MCF 10A (cell line): ENCODE measurements at regions of chr1 and their contacts with region 1.

Region 1: GRCh38 chr1:38859561-38860453 is at the start of gene RRAGC:
- DNase-seq: peak; percentile 99
- H3K4me3 Mint-ChIP-seq: peak within 1 kb of the TSS; percentile 93
- H3K27ac Mint-ChIP-seq: peak within 1 kb of the TSS; percentile 81
- H3K4me1 Mint-ChIP-seq: peaks cover 21% of the 10 kb centered on the region
- H3K27me3 Mint-ChIP-seq: no peaks in the 10 kb centered on the region
- CTCF ChIP-seq: no peak
- total RNA-seq, gene RRAGC: 23.3 and 40.6 TPM in 2 replicates

Region 2: DNA sequence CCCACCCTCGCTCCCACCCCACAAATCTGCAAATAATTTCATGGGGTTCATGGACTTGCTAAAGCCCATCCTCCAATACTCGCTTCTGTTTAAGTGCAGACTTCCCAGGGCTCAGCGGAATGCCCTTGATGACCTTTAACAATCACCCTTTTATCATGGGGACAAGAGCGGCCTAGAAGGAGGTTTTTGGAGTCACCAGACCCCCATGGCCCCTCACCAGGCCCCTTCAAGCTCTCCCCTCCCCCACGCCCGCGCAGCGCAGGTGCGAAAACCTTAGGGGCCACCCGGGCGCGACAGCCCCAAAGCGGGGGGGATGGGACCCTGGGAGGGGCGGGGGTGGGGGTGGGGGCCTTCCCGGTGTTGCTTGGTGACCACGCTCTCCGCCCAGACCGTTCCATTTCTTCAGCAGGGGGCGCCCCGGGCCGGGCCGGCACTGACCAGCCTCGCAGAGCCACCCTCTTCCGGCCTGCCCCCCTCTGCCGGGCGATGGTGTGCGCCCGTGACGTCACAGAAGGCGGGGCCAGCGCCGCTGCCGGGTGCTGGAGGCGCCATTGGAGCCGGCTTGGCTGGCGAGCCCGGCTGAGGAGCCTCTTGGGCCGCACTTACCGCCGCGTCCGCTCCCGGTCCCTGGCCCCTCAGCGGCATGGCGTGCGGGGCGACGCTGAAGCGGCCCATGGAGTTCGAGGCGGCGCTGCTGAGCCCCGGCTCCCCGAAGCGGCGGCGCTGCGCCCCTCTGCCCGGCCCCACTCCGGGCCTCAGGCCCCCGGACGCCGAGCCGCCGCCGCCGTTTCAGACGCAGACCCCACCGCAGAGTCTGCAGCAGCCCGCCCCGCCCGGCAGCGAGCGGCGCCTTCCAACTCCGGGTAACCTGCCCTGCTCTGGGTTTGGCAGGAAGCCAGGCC is 131.2 kb after region 1 on chr1 and contains the start of gene AKIRIN1:
- CTCF ChIA-PET with region 1: interaction called, 3 read pairs
- POLR2A ChIA-PET with region 1: interaction called, 10 read pairs
- intact Hi-C with region 1: no loop called
- DNase-seq: peak; percentile 92
- H3K4me3 Mint-ChIP-seq: peak within 1 kb of the TSS; percentile 79
- H3K27ac Mint-ChIP-seq: peak within 1 kb of the TSS; percentile 76
- H3K4me1 Mint-ChIP-seq: peaks cover 21% of the 10 kb centered on the region
- H3K27me3 Mint-ChIP-seq: no peaks in the 10 kb centered on the region
- CTCF ChIP-seq: no peak
- total RNA-seq, gene AKIRIN1: 59.0 and 63.7 TPM in 2 replicates

Region 3: DNA sequence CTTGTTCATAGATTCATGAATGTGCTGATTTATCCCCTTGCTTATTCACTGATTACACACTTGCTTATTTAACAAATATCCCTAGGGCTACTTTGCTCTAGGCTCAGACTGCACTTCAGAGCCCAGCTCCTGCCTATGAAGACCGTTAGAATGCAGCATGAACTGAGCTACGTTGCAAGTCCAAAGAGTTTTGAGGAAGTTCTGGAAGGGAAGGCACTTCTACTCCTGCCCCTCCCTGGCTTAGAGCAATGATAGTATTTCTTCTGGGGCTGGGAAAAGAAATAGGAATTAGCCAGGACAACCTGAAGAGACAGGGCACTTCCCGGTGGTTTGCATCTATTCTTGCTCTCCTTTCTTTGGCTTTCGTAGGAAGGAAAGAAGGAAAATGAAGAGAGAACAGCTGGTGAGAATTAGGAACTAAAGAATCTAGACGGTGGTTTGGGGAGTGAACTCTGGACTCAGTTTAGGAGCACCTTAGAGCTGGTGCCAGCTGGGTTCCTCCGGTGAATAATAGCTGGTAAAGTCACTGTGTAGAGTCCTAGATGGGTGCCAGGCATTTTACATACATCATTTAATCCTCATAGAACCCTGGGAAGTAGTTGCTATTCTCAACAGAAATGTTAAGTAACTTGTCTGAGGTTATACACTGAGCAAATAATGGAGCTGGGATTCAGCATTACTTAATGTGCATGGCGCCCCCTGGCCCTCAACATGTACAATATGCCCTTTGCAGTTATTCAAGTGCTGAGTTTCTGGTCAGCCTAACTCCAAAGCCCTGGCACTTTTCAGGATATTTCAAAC is 232.2 kb after region 1 on chr1:
- CTCF ChIA-PET with region 1: interaction called, 6 read pairs
- POLR2A ChIA-PET with region 1: interaction called, 3 read pairs
- intact Hi-C with region 1: loop called (anchors 1 kb)
- DNase-seq: peak; percentile 83
- H3K4me3 Mint-ChIP-seq: no peak overlapping the region
- H3K27ac Mint-ChIP-seq: no peak overlapping the region
- H3K4me1 Mint-ChIP-seq: no peaks in the 10 kb centered on the region
- H3K27me3 Mint-ChIP-seq: no peaks in the 10 kb centered on the region
- CTCF ChIP-seq: peak; percentile 74